Activated CD4-positive, alpha-beta T cell treated with anti-CD3 and anti-CD28 coated beads, Interleukin-2, amount 10 ng/mL, durations not matched to agents 7 days and 5 days (primary cell): ENCODE measurements at regions of chr1 and their contacts with region 1.

Region 1: DNA sequence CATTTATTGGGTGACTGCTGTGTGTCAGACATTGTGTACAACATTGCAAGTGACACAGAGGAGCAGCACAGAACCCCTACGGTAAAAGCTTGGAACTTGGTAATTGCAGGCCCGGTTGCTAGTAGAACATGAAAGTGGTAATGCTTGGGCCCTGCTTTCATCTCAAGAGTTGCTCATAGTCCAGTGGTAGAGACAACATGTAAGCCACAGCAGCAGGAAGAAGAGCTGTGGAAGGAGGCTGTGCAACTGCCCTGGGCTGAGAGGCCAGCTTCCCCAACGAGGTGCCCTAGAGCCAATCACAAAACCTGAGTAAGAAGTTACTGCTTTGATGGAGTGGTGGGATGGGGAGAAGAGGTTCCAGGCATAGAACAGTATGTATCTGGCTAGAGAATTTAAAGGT is 18.4 kb downstream of the CNIH4 start:
- DNase-seq: no peak
- H3K4me3 Mint-ChIP-seq: no peak overlapping the region
- H3K27ac Mint-ChIP-seq: peak overlapping the region; percentile 81
- H3K4me1 Mint-ChIP-seq: peaks cover 66% of the 10 kb centered on the region
- H3K27me3 Mint-ChIP-seq: no peaks in the 10 kb centered on the region

Region 2: DNA sequence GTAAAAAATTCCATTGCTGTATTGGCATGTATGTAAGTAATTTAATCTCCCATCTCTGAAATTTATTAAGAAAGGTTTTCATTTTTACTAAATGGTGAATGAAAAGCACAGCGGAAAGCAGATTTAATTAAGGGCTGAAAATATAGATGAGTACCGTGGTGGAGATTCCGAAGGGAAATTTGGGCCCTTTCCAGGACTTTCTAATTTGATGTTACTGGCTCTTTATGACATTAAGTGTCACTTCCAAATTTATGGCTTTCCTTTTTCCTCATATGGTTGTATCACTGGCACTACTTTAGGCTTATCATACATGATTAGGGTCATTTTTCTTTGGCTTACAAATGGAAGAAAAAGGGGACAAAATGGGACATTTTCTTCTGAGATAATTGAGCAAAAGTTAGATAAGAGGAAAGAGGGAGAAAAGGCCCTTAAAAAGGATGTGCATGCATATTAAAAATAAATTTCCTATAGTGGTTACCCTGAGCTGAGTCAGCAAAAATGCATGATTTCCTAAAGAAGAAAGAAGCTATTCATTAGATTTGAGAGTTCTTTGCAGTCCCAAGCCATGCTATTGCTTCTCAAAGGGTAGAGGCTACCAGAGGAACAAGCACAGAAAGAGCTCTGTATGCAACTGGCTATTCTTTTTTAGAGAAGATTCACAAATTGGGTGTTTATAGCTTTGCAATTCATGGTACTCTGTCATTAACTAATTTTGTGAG is 166.2 kb after region 1 on chr1:
- CTCF ChIA-PET with region 1: no interaction called
- POLR2A ChIA-PET with region 1: interaction called, 23 read pairs
- DNase-seq: no peak
- H3K4me3 Mint-ChIP-seq: no peak overlapping the region
- H3K27ac Mint-ChIP-seq: no peak overlapping the region
- H3K4me1 Mint-ChIP-seq: peaks cover 16% of the 10 kb centered on the region
- H3K27me3 Mint-ChIP-seq: peaks cover 6% of the 10 kb centered on the region